Activated CD4-positive, alpha-beta T cell treated with anti-CD3 and anti-CD28 coated beads for 36 hours (primary cell): ENCODE measurements at regions of chr17 and their contacts with region 1.

Region 1: GRCh38 chr17:8189711-8190477 is at the start of gene BORCS6:
- DNase-seq: peak; percentile 98
- ATAC-seq: peak; percentile 67
- H3K4me3 Mint-ChIP-seq: no peak within 1 kb of the TSS
- H3K27ac Mint-ChIP-seq: peak within 1 kb of the TSS; percentile 86
- H3K4me1 Mint-ChIP-seq: peaks cover 10% of the 10 kb centered on the region
- H3K27me3 Mint-ChIP-seq: no peaks in the 10 kb centered on the region
- total RNA-seq, gene BORCS6: 3.9 to 4.5 TPM

Region 2: GRCh38 chr17:7915611-7916382 is 274.1 kb before region 1 on chr17 and contains the start of gene RNF227:
- CTCF ChIA-PET with region 1: no interaction called
- POLR2A ChIA-PET with region 1: no interaction called
- intact Hi-C with region 1: no loop called
- DNase-seq: peak; percentile 95
- ATAC-seq: peak; percentile 88
- H3K4me3 Mint-ChIP-seq: peak within 1 kb of the TSS; percentile 86
- H3K27ac Mint-ChIP-seq: peak within 1 kb of the TSS; percentile 82
- H3K4me1 Mint-ChIP-seq: peaks cover 27% of the 10 kb centered on the region
- H3K27me3 Mint-ChIP-seq: no peaks in the 10 kb centered on the region
- total RNA-seq, gene RNF227: 3.8 to 5.6 TPM

Region 3: DNA sequence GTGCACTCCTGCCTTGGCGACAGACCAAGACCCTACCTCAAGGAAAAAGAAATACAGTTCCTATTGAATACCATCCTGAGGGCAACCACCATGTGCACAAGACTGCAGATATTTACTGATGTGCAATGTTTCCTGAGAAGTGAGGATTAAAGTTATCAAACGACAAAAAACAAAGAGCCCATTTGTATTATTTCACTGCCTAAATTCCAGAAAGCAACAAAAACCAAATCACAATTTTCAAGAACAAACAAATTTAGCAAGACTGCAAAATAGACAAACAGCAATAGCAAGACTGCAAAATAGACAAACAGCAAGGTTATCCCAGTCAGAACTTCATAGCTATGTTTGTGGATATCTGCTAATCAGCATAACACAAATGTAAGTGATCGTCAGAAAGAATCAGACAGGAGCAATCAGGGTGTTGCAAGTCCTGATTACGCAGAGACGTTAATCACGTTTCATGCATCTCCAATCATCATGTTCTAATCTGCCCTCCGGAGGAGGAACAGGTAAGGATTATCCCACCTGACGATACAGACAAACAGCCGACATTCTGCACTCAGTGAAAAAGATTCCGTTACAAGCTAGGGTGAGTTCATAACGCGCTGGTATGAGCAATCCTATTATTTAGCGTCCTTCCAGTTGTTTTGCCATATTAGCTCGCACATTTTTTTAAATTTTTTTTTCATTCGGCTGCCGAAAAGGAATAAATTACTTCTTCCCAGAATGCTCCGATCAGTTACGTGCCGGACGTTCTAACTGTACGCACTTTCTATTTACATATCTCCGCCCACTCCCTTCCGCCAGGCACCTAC is 16.6 kb before region 1 on chr17:
- CTCF ChIA-PET with region 1: interaction called, 18 read pairs
- POLR2A ChIA-PET with region 1: interaction called, 78 read pairs
- intact Hi-C with region 1: loop called (anchors 1 kb)
- DNase-seq: peak; percentile 91
- ATAC-seq: peak; percentile 87
- H3K4me3 Mint-ChIP-seq: peak overlapping the region; percentile 78
- H3K27ac Mint-ChIP-seq: peak overlapping the region; percentile 96
- H3K4me1 Mint-ChIP-seq: peaks cover 40% of the 10 kb centered on the region
- H3K27me3 Mint-ChIP-seq: no peaks in the 10 kb centered on the region

Region 4: DNA sequence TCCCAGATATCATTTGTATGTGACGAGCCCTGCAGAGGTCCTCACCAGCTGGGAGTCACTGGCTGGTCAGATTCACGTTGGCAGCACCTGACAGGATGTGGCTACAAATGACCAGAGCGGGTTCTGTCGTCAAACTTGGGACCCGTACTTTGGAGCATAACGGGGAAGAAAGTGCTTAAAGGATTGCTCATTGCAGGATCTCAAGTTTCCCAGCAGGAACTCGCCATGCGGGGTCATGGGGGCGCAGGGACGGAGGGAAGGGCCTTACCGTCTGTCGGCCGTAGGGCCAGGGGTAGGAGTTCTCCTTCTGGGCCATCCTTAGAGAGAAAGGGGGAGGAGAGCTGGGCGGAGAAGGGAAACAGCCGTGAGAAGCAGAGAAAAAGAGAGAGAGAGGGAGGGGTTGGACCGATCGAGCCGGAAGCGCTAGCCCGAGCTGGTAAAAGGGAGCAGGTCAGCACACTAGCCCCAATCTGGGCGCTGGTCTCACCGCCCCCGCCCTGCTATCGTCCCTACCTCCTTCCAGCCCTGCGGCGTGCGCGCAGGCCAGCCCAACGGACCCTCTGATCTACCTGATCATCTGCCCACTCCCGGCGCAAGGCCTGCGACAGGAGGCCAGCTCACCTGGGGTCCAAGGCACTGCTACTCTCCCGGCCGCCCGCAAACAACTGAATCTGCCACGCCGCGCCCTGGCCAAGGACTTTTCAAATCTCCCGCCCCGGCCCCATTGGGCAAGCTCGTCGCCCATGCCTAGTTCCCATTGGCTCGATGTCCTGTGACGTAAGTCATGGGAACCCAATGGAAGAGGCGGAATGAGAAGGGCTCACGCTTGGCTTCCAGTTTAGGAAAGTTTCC is 20.2 kb after region 1 on chr17 and contains the start of gene AURKB:
- CTCF ChIA-PET with region 1: interaction called, 7 read pairs
- POLR2A ChIA-PET with region 1: interaction called, 7 read pairs
- intact Hi-C with region 1: loop called (anchors 1 kb)
- DNase-seq: peak; percentile 96
- ATAC-seq: peak; percentile 98
- H3K4me3 Mint-ChIP-seq: peak within 1 kb of the TSS; percentile 99
- H3K27ac Mint-ChIP-seq: peak within 1 kb of the TSS; percentile 97
- H3K4me1 Mint-ChIP-seq: peaks cover 20% of the 10 kb centered on the region
- H3K27me3 Mint-ChIP-seq: no peaks in the 10 kb centered on the region
- total RNA-seq, gene AURKB: 173 to 226 TPM

Region 5: DNA sequence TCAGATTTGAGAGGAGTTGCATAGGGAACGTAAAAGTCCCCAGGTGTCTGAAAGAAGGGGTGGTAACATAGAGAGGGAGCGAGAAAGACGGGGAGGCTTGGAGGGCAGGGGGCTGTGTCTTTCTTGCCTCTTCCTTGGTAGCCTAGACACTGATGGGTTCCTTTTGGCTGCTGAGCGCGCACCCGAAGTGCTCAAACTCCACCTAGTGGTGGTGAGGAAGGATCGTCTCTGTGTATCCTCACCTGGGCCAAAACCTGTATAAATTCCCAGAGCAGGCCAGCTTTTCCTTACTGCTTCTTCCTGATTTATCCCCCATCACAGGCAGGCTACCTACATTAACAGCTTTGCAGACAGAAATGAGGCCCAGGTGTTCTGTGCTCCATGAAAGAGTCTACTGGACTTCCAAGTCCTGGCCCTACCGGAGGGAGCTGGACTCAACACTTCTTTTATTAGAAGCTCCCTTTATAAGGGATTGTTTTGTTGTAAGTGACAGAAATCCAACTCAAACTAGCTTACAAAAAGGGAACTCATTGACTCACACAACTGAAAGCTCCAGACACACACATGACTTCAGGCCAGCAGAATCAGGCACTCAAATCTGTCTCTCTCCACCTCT is 110.8 kb after region 1 on chr17:
- CTCF ChIA-PET with region 1: interaction called, 6 read pairs
- POLR2A ChIA-PET with region 1: no interaction called
- intact Hi-C with region 1: loop called in 1 of 2 experiments (anchors 2 kb)
- DNase-seq: peak; percentile 76
- ATAC-seq: peak; percentile 97
- H3K4me3 Mint-ChIP-seq: peak overlapping the region; percentile 16
- H3K27ac Mint-ChIP-seq: peak overlapping the region; percentile 6
- H3K4me1 Mint-ChIP-seq: peaks cover 8% of the 10 kb centered on the region
- H3K27me3 Mint-ChIP-seq: no peaks in the 10 kb centered on the region

Region 6: GRCh38 chr17:9444687-9445086 is 1254.8 kb after region 1 on chr17:
- CTCF ChIA-PET with region 1: no interaction called
- POLR2A ChIA-PET with region 1: no interaction called
- intact Hi-C with region 1: no loop called
- DNase-seq: no peak
- ATAC-seq: no peak
- H3K4me3 Mint-ChIP-seq: no peak overlapping the region
- H3K27ac Mint-ChIP-seq: no peak overlapping the region
- H3K4me1 Mint-ChIP-seq: no peaks in the 10 kb centered on the region
- H3K27me3 Mint-ChIP-seq: no peaks in the 10 kb centered on the region